ENCODE measurements at regions of chr1 and their contacts with region 1.

Region 1: GRCh38 chr1:5992026-5992813 is at the start of gene NPHP4:
- DNase-seq: peak; percentile 100
- H3K4me3 Mint-ChIP-seq: peak within 1 kb of the TSS; percentile 96
- H3K27ac Mint-ChIP-seq: peak within 1 kb of the TSS; percentile 96
- H3K4me1 Mint-ChIP-seq: peaks cover 22% of the 10 kb centered on the region
- H3K27me3 Mint-ChIP-seq: no peaks in the 10 kb centered on the region
- total RNA-seq, gene NPHP4: 19.0 and 20.2 TPM in 2 replicates

Region 2: GRCh38 chr1:6026095-6026809 is 34.0 kb after region 1 on chr1:
- intact Hi-C with region 1: loop called (anchors 1 kb)
- DNase-seq: peak; percentile 91
- H3K4me3 Mint-ChIP-seq: peak overlapping the region; percentile 98
- H3K27ac Mint-ChIP-seq: peak overlapping the region; percentile 97
- H3K4me1 Mint-ChIP-seq: peaks cover 44% of the 10 kb centered on the region
- H3K27me3 Mint-ChIP-seq: no peaks in the 10 kb centered on the region